Activated CD8-positive, alpha-beta T cell treated with anti-CD3 and anti-CD28 coated beads, Interleukin-2, amount 10 ng/mL, durations not matched to agents 7 days and 5 days (primary cell): ENCODE measurements at regions of chr9 and their contacts with region 1.

Region 1: DNA sequence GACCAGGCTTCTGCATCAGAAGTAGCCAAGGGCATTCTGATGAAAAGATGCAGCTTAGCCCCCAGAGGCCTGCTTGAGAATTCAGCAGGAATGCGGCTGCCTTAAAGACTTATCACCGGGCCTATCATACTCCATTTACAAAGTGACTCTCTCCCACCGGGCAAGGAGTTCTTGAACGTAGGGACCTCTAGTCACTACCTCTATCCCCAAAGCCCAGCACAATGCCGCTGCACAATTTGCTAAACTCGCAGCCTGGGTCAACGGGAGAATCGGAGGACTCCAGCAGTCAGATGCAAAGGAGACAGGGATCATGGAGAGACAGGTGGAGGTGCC is 661 bp downstream of the PDCL start:
- DNase-seq: no peak
- ATAC-seq: no peak
- H3K4me3 Mint-ChIP-seq: peak overlapping the region; percentile 99
- H3K27ac Mint-ChIP-seq: peak overlapping the region; percentile 93
- H3K4me1 Mint-ChIP-seq: peaks cover 37% of the 10 kb centered on the region
- H3K27me3 Mint-ChIP-seq: no peaks in the 10 kb centered on the region

Region 2: DNA sequence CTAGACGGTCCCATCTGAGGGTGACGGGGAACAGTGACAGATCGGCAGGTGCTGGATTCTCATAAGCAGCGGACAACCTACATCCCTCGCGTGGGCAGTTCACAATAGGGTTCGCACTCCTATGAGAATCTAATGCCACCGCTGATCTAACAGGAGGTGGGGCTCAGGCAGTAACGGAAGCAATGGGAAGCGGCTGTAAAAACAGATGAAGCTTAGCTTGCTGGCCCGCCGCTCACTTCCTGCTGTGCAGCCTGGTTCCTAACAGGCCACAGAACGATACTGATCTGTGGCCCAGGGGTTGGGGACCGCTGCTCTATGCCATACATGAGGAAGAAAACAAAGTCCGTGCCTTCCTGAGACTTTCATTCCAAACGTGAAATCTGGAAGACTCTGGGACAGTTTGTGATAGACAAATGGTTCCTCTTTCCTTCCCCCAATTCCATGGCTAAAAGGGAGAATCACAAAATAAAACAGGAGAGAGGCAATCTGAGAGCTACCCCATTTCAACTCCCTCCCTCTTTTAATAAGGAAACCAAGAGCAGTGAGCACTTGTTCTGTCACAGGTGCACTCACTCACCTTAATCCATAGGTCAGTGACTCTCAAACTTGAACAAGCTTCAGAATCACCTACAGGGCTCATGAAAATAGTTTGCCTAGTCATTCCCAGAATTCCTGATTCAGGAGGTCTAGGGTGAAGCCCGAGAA is 11.4 kb before region 1 on chr9:
- CTCF ChIA-PET with region 1: interaction called, 5 read pairs
- POLR2A ChIA-PET with region 1: interaction called, 12 read pairs
- DNase-seq: peak; percentile 69
- ATAC-seq: peak; percentile 95
- H3K4me3 Mint-ChIP-seq: peak overlapping the region; percentile 59
- H3K27ac Mint-ChIP-seq: peak overlapping the region; percentile 91
- H3K4me1 Mint-ChIP-seq: peaks cover 33% of the 10 kb centered on the region
- H3K27me3 Mint-ChIP-seq: no peaks in the 10 kb centered on the region